Uterus (tissue), 4 donors: ENCODE measurements at regions of chr6 and their contacts with region 1.

Region 1: DNA sequence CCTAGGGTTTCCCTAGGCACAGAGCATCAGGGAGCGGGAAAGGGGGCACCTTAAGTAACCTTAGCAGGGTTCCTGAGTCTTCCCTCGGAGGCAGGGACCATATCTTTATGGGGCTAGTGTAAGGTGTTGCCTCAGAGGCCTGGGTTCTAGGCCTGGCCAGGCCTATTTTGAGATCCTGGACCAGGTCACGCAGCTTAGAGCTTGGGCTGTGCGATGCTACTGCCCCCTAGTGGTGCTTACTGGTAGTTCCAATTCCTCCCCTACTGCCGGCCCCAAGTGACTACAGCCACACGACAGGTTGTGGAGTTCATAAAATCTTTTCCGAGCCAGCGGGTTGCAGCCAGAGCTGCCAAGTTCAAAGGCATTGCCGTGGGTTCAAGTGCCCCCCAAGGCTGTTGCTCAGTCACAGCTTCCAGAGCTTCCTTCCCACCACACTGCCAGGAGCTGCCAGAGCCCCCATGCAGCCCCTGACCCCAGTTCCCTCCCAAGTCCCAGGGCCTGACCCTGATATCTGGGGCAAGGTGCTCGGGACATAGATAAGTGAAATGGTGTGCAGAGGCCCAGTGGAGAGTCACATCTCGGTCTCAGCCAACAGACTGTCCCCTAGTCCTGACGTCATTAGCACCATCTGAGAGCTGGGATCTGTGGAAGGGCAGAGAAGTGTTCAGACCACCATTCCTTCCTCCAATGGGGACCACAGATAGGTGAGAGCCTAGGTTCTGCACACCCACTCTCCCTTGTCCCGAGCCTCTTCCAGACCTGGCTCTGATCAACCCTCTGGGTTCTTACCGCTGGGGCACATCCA is 3.3 kb downstream of the LRRC73 start:
- DNase-seq: peak; percentile 78 to 79
- H3K4me3 ChIP-seq: no peak overlapping the region
- H3K27ac ChIP-seq: peak overlapping the region in 1 of 2 donors; percentile 42
- H3K4me1 ChIP-seq: peaks cover 0 to 5% of the 10 kb centered on the region in 2 donors
- H3K27me3 ChIP-seq: no peaks in the 10 kb centered on the region
- CTCF ChIP-seq: peak; percentile 89 to 96 (median 93)
- POLR2A ChIP-seq: no peak

Region 2: GRCh38 chr6:43386492-43386891 is 120.4 kb before region 1 on chr6:
- intact Hi-C with region 1: no loop called
- DNase-seq: no peak
- H3K4me3 ChIP-seq: no peak overlapping the region
- H3K27ac ChIP-seq: no peak overlapping the region
- H3K4me1 ChIP-seq: no peaks in the 10 kb centered on the region
- H3K27me3 ChIP-seq: no peaks in the 10 kb centered on the region
- CTCF ChIP-seq: no peak
- POLR2A ChIP-seq: no peak

Region 3: GRCh38 chr6:43444036-43444435 is 62.8 kb before region 1 on chr6:
- intact Hi-C with region 1: no loop called
- DNase-seq: no peak
- H3K4me3 ChIP-seq: no peak overlapping the region
- H3K27ac ChIP-seq: no peak overlapping the region
- H3K4me1 ChIP-seq: no peaks in the 10 kb centered on the region
- H3K27me3 ChIP-seq: no peaks in the 10 kb centered on the region
- CTCF ChIP-seq: no peak
- POLR2A ChIP-seq: no peak

Region 4: DNA sequence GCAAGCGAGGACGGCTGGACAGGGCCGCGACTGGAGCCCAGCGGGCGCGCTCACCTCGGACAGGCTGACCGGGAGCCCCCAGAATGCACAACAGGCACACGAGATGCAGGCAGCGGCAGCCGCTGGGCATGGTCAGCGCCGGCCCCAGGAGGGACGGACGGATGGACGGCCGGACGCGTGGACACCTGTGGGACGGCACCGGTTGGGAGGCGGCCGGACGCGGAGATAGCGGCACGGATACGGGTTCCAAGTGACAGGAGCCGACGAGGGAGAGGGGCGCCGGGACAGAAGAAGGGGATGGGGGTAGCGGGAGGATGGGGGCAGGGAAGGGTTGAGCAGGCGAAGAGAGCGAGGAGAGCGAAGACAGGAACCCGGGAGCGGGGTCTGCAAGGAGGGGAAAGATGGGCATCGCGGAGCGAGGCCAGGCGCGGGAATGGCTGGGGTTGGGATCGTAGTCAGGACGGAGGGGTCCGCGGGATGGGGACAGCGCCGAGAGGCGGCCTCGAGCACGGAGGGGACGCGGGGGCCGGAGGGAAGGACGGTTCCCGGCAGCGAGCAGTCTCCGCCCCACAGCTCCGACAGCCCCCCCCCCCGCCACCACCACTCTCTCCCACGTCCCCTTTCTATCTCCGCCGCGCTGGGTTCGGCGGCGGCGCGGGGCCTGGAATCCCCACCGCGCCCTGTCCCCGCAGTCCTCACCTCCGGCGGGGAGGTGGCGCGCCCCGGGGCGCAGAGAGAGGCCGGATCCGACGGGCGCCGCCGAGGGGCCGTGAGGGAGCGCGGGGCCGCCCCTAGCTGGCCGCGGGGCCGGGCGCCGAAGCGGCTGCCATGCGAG is 52.0 kb before region 1 on chr6:
- intact Hi-C with region 1: loop called (anchors 2 kb)
- DNase-seq: peak; percentile 68 to 80
- H3K4me3 ChIP-seq: peak overlapping the region; percentile 29 to 38
- H3K27ac ChIP-seq: peak overlapping the region in 1 of 2 donors; percentile 36
- H3K4me1 ChIP-seq: peaks cover 0 to 6% of the 10 kb centered on the region in 2 donors
- H3K27me3 ChIP-seq: peaks cover 4 to 32% of the 10 kb centered on the region in 2 donors
- CTCF ChIP-seq: no peak
- POLR2A ChIP-seq: no peak

Region 5: DNA sequence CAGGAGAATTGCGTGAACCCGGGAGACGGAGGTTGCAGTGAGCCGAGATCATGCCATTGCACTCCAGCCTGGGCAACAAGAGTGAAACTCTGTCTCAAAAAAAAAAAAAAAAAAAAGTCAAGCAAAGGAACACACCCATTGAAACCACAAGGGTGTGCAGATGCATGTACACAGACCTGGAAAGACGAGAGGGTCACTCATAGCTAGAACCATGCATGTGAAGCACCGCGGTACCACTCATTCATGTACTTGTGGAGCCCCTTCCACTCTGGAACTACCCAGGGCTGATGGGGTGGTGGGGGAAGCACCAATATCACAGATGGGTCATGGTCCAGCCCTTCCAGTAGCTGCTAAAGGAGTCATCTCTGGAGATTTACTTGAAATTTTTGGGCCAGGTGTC is 36.9 kb before region 1 on chr6:
- intact Hi-C with region 1: loop called (anchors 5 kb)
- DNase-seq: no peak
- H3K4me3 ChIP-seq: no peak overlapping the region
- H3K27ac ChIP-seq: no peak overlapping the region
- H3K4me1 ChIP-seq: no peaks in the 10 kb centered on the region
- H3K27me3 ChIP-seq: no peaks in the 10 kb centered on the region
- CTCF ChIP-seq: no peak
- POLR2A ChIP-seq: no peak